Activated CD8-positive, alpha-beta T cell treated with anti-CD3 and anti-CD28 coated beads, Interleukin-2, amount 10 ng/mL, durations not matched to agents 7 days and 5 days (primary cell): ENCODE measurements at regions of chr22 and their contacts with region 1.

Region 1: GRCh38 chr22:36506637-36507517 is at the start of gene FOXRED2:
- DNase-seq: peak; percentile 93
- ATAC-seq: peak; percentile 96
- H3K4me3 Mint-ChIP-seq: peak within 1 kb of the TSS; percentile 66
- H3K27ac Mint-ChIP-seq: peak within 1 kb of the TSS; percentile 72
- H3K4me1 Mint-ChIP-seq: peaks cover 20% of the 10 kb centered on the region
- H3K27me3 Mint-ChIP-seq: no peaks in the 10 kb centered on the region
- total RNA-seq, gene FOXRED2: 19.0 to 20.3 TPM

Region 2: DNA sequence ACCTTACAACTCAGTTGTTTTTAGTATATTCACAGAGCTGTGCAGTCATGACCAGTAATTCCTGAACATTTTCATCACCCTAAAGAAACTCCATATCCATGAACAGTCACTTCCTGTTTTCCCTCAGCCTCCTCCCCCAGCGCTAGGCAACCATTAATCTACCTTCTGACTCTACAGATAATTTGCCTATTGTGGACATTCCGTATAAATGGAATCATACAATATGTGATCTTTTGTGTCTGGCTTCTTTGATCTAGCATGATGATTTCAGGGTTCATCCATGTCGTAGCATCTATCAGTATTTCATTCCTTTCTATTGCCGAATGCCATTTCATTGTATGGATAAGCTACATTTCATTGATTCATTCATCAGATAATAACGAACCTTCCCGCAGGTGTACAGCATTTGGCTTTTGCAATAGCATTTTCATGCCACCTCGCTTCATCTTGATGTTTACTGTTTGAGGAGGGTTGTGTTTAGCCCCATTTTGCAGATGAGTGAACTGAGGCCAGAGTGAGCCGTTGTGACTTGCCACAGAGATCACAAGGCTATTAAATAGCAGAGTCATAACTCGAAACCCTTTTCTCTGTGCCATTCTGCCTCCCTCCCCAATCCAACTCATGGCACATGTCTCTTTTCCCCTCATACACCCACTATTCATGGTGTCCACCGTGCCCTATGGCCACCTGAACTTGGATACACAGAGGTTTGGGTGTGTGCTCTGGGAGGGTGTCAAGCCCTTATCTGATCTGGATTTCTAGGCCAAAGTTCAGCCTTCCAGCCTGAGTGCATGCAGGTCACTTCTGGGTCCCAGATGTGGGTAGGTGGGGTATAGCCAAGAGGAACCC is 108.0 kb before region 1 on chr22:
- CTCF ChIA-PET with region 1: no interaction called
- POLR2A ChIA-PET with region 1: no interaction called
- DNase-seq: no peak
- ATAC-seq: no peak
- H3K4me3 Mint-ChIP-seq: no peak overlapping the region
- H3K27ac Mint-ChIP-seq: peak overlapping the region; percentile 32
- H3K4me1 Mint-ChIP-seq: peaks cover 35% of the 10 kb centered on the region
- H3K27me3 Mint-ChIP-seq: no peaks in the 10 kb centered on the region

Region 3: DNA sequence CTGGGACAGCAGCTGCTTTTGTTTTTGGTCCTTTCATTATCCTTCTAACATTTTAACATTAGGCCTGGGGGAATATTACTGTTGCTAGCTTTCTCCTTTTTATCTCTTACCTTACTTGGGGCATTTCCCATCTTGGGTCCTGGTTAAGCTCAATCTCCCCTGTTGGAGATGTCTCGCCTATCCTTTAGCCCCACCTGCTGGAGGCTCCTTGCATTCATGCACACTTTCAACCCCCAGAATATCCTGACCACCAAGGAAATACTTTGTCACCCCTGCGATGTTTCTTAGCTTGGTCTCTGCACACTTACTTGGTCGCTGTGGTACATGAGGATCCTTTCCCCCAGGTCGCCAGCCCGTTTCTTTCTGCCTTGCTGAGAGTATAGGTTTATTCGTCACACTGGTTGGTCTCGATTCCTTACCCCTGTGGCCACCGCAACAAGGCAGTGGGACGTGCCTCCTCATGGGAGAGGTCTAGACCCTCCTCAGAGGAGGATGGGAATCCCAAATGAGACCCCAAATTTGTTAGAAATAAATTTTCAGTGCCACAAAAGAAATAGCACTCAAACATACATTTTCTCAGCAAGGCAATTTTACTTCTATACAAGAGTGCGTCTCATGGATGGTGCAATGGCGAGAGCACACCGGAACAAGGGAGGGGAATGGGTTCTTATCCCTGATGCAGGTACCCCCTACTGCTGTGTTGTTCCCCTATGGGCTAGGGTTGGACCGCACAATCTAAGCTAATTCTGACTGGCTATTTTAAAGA is 20.1 kb before region 1 on chr22:
- CTCF ChIA-PET with region 1: interaction called, 10 read pairs
- POLR2A ChIA-PET with region 1: interaction called, 5 read pairs
- DNase-seq: peak; percentile 72
- ATAC-seq: no peak
- H3K4me3 Mint-ChIP-seq: no peak overlapping the region
- H3K27ac Mint-ChIP-seq: no peak overlapping the region
- H3K4me1 Mint-ChIP-seq: peaks cover 8% of the 10 kb centered on the region
- H3K27me3 Mint-ChIP-seq: no peaks in the 10 kb centered on the region

Region 4: DNA sequence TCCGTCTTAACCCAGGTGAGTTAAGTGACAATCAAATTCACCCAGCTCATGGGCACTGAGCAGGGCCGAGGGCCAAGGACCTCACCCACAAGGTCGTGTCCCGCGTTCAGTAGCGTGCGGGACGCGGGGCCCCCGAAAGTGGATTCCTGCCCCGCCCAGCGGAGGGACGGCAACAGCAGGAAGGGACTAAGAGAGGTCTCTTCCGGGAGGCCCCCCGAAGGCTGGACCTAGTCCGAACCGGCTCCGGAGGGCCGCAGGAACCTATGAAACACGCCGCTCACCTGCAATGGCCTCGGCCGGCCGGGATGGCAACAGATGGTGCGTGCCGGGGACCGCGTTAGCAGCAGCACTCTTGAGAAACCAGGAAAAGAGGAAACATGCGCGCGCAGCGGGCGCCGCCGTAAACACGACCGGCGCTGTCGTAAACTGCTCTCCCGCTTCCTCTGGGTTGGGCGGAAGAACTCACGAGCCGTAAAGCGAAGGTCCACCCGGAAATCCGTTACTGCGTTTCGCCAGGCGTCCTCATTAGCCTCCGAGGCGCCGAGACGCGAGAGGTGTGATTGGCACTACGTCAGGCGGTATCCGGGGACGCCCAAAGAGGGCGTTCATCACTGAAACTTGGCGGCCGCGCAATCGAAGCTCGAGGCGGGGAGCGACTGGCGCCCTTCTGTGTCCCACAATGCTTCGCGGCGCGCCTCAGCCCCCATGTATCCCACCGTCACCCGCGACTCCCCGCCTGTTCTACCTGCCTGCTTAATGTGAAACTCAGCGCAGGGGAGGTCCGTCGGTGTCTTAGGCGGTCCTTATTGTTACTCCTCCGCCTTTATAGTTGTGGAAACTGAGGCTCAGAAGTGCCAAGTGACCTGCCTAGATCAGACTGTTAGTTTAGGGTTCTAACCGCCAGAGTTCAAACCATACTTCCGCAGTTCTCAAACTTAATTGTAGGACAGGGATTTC is 22.2 kb after region 1 on chr22 and contains the start of gene EIF3D:
- CTCF ChIA-PET with region 1: interaction called, 13 read pairs
- POLR2A ChIA-PET with region 1: interaction called, 13 read pairs
- DNase-seq: peak; percentile 99
- ATAC-seq: peak; percentile 97
- H3K4me3 Mint-ChIP-seq: peak within 1 kb of the TSS; percentile 91
- H3K27ac Mint-ChIP-seq: peak within 1 kb of the TSS; percentile 99
- H3K4me1 Mint-ChIP-seq: peaks cover 28% of the 10 kb centered on the region
- H3K27me3 Mint-ChIP-seq: no peaks in the 10 kb centered on the region
- total RNA-seq, gene EIF3D: 186 to 190 TPM